A673 (cell line): ENCODE measurements at regions of chr10 and their contacts with region 1.

Region 1: GRCh38 chr10:101840741-101841453 is 2.7 kb downstream of the KCNIP2 start:
- DNase-seq: peak; percentile 90
- H3K4me3 ChIP-seq: peak overlapping the region; percentile 40
- H3K27ac ChIP-seq: no peak overlapping the region
- H3K4me1 ChIP-seq: peaks cover 9% of the 10 kb centered on the region
- H3K27me3 ChIP-seq: no peaks in the 10 kb centered on the region
- CTCF ChIP-seq: peak; percentile 99

Region 2: GRCh38 chr10:101506829-101507661 is 333.9 kb before region 1 on chr10:
- CTCF ChIA-PET with region 1: no interaction called
- POLR2A ChIA-PET with region 1: no interaction called
- intact Hi-C with region 1: no loop called
- DNase-seq: no peak
- H3K4me3 ChIP-seq: no peak overlapping the region
- H3K27ac ChIP-seq: no peak overlapping the region
- H3K4me1 ChIP-seq: peaks cover 13% of the 10 kb centered on the region
- H3K27me3 ChIP-seq: no peaks in the 10 kb centered on the region
- CTCF ChIP-seq: no peak

Region 3: DNA sequence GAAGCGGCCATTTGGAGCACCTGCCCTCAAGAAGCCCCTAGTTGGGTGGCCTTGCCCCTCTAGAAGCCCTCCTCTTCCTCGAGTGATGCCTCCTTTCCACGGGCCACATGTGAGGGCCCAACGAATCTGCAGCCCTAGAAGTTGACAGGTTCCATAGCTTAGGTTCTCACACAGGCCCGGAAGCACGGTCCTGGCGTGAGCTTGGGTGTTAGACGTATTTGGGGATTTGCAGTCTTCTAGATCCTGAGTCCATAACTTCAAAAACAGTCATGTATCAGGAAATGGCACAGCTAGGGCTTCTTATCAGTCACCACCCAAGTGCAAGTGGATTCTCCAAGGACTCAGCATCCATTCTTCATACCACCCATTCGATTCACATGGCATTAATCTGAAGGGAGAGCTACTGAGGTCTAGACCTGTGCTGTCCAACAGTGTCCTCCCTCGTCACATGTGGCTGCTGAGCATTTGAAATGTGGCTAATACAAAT is 145.4 kb before region 1 on chr10:
- CTCF ChIA-PET with region 1: no interaction called
- POLR2A ChIA-PET with region 1: interaction called, 21 read pairs
- intact Hi-C with region 1: no loop called
- DNase-seq: peak; percentile 33
- H3K4me3 ChIP-seq: peak overlapping the region; percentile 80
- H3K27ac ChIP-seq: peak overlapping the region; percentile 98
- H3K4me1 ChIP-seq: no peaks in the 10 kb centered on the region
- H3K27me3 ChIP-seq: no peaks in the 10 kb centered on the region
- CTCF ChIP-seq: no peak

Region 4: GRCh38 chr10:101879456-101880231 is 38.7 kb after region 1 on chr10:
- CTCF ChIA-PET with region 1: interaction called, 10 read pairs
- POLR2A ChIA-PET with region 1: interaction called, 3 read pairs
- intact Hi-C with region 1: no loop called
- DNase-seq: no peak
- H3K4me3 ChIP-seq: no peak overlapping the region
- H3K27ac ChIP-seq: no peak overlapping the region
- H3K4me1 ChIP-seq: no peaks in the 10 kb centered on the region
- H3K27me3 ChIP-seq: no peaks in the 10 kb centered on the region
- CTCF ChIP-seq: no peak

Region 5: DNA sequence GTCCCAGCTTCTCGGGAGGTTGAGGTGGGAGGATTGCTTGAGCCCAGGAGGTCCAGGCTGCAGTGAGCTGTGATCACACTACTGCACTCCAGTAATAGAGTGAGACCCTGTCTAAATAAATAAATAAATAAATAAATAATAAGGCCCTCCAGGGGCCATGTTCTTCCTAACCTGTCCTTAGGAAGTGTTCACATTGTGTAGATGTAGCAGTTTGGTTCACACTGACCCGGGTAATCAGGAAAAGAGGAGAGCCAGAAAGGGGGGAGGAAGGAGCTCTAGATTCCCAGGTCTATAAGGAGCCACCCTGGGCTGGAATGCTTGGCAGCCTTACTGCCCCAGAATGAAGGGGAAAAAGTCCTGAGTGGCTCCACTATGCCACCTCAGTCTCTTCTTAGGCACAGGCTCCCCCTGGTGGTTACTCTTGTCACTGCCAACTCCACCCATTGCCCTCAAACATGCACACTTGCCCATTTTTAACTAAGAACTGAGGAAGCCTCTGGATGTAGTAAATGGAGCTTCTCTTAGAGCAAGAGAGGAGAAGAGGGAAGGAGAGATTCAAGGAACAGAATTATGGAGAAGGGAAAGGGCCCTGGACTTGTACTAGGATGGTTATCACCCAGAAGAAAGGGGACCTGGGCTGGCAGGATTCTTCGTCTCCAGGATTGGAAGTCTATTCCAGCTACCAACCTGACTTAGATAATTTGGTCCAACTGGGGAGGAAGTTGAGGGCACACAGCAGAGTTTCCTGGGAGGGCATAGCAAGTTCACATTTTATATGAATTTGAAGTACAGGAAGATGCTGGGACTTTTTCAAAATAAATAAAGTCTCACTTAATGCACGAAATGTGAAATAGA is 232.0 kb after region 1 on chr10:
- CTCF ChIA-PET with region 1: interaction called, 23 read pairs
- POLR2A ChIA-PET with region 1: no interaction called
- intact Hi-C with region 1: loop called (anchors 1 kb)
- DNase-seq: peak; percentile 87
- H3K4me3 ChIP-seq: no peak overlapping the region
- H3K27ac ChIP-seq: no peak overlapping the region
- H3K4me1 ChIP-seq: no peaks in the 10 kb centered on the region
- H3K27me3 ChIP-seq: no peaks in the 10 kb centered on the region
- CTCF ChIP-seq: peak; percentile 97

Region 6: GRCh38 chr10:102291221-102291905 is 450.5 kb after region 1 on chr10:
- CTCF ChIA-PET with region 1: interaction called, 10 read pairs
- POLR2A ChIA-PET with region 1: no interaction called
- intact Hi-C with region 1: no loop called
- DNase-seq: no peak
- H3K4me3 ChIP-seq: no peak overlapping the region
- H3K27ac ChIP-seq: no peak overlapping the region
- H3K4me1 ChIP-seq: no peaks in the 10 kb centered on the region
- H3K27me3 ChIP-seq: no peaks in the 10 kb centered on the region
- CTCF ChIP-seq: no peak